Right cardiac atrium (tissue), 5 donors: ENCODE measurements at regions of chr10 and their contacts with region 1.

Region 1: GRCh38 chr10:121615435-121615793 is 17.2 kb upstream of the FGFR2 start:
- DNase-seq: no peak
- ATAC-seq: peak in 1 of 2 donors; percentile 32
- H3K4me3 ChIP-seq: no peak overlapping the region
- H3K27ac ChIP-seq: no peak overlapping the region
- H3K4me1 ChIP-seq: no peaks in the 10 kb centered on the region
- H3K27me3 ChIP-seq: no peaks in the 10 kb centered on the region

Region 2: DNA sequence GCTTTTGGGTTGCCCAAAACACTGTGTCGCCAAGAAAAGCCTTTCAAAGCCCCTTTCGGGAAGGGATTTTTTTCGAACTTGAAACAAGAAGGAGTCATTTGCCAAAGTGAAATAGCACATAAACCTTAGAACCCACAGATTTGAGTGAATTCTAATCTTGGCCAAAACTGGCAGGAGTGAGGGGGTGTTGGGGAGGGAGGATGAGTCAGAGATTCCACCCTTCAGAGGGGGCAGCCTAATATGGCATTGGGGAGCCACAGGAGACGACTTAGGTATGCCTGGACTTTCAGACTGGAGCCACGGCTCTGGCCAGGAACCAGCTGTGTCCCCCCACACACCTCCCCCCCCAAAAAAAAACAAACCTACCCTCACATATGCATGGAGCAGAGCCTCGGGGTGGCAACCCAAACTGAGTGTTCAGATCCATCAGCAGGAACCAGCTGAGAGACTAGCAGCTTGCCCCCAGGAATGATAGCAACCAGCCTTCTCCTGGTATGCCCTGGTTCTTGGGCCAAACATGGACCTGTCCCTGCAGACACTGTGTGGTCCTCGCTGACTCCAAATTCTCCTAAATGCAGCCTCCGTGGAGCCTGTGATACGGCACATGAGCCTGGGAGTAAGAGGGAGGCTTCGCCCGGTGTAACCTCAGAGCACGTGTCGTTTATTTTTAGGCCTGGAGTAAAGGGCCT is 155.5 kb before region 1 on chr10:
- intact Hi-C with region 1: no loop called
- DNase-seq: no peak
- ATAC-seq: peak in 1 of 2 donors; percentile 23
- H3K4me3 ChIP-seq: no peak overlapping the region
- H3K27ac ChIP-seq: no peak overlapping the region
- H3K4me1 ChIP-seq: no peaks in the 10 kb centered on the region
- H3K27me3 ChIP-seq: no peaks in the 10 kb centered on the region

Region 3: GRCh38 chr10:121680879-121681672 is 65.7 kb after region 1 on chr10:
- intact Hi-C with region 1: no loop called
- DNase-seq: no peak
- ATAC-seq: no peak
- H3K4me3 ChIP-seq: no peak overlapping the region
- H3K27ac ChIP-seq: no peak overlapping the region
- H3K4me1 ChIP-seq: no peaks in the 10 kb centered on the region
- H3K27me3 ChIP-seq: no peaks in the 10 kb centered on the region

Region 4: DNA sequence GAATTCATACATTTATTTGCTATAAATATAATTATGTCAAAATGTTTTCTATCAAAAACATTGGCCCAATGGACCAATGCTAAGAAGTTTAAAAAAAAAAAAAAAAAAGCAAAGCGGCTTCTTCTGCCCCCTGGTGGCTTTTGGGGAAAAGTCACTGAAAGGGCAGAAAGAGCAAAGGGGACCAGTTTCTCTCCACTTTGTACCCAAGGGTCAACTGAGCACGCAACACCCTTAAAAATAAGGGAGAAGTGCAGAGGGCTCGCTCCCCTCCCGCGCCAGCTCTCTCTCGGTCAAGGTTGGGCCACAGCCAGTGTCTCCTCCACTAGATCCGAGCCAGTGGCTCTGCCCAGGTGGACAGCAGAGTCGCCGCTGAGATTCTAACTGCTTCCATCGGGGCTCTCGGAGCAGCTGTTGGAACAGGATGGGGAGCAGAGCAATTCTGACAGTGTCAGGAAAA is 119.2 kb after region 1 on chr10:
- intact Hi-C with region 1: loop called in 2 of 4 experiments (anchors 5 to 10 kb)
- DNase-seq: peak in 2 of 3 donors; percentile 16 to 52
- ATAC-seq: peak in 1 of 2 donors; percentile 56
- H3K4me3 ChIP-seq: no peak overlapping the region
- H3K27ac ChIP-seq: no peak overlapping the region
- H3K4me1 ChIP-seq: no peaks in the 10 kb centered on the region
- H3K27me3 ChIP-seq: no peaks in the 10 kb centered on the region